ENCODE measurements at regions of chr19 and their contacts with region 1.

Region 1: GRCh38 chr19:9674663-9675357 is at the start of gene ZNF562:
- DNase-seq: peak; percentile 84 to 92 (median 88)
- H3K4me3 ChIP-seq: peak within 1 kb of the TSS; percentile 54 to 98 (median 86)
- H3K27ac ChIP-seq: peak within 1 kb of the TSS; percentile 67 to 99 (median 96)
- H3K27me3 ChIP-seq: no peaks in the 10 kb centered on the region
- CTCF ChIP-seq: peak in 20 of 56 donors; percentile 11 to 41 (median 20)
- total RNA-seq, gene ZNF562: 31.2 to 59.9 (median 44.7) TPM

Region 2: GRCh38 chr19:9323919-9324583 is 350.8 kb before region 1 on chr19 and contains the start of gene ZNF559:
- intact Hi-C with region 1: loop called in 1 of 2 experiments (anchors 10 kb)
- DNase-seq: peak; percentile 76 to 90 (median 84)
- H3K4me3 ChIP-seq: peak within 1 kb of the TSS; percentile 67 to 100 (median 89)
- H3K27ac ChIP-seq: peak within 1 kb of the TSS; percentile 52 to 96 (median 89)
- H3K27me3 ChIP-seq: no peaks in the 10 kb centered on the region
- CTCF ChIP-seq: peak in 39 of 56 donors; percentile 12 to 60 (median 31)
- total RNA-seq, gene ZNF559: 14.4 to 49.0 (median 29.6) TPM

Region 3: DNA sequence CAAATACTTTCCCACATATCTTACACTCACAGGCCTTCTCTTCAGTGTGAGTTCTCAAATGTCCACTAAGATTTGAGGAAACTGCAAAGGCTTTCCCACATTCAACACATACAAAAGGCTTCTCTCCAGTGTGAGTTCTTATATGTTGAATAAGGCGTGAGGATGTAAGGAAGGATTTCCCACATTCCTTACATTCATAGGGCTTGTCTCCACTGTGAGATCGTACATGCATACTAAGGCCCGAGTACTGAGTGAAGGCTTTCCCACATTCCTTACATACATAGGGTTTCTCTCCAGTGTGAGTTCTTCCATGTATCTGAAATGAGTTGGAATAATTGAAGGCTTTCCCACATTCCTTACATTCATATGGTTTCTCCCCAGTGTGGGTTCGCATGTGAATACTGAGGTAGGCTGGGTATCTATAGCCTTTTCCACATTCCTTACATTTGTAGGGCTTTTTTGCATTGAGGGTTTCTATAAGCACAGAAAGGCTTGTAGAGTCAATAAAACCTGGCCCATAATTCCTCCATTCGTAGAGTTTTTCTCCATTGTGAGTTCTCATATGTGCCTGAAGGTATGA is 146.0 kb before region 1 on chr19:
- intact Hi-C with region 1: no loop called
- DNase-seq: no peak
- H3K4me3 ChIP-seq: no peak overlapping the region
- H3K27ac ChIP-seq: no peak overlapping the region
- H3K27me3 ChIP-seq: no peaks in the 10 kb centered on the region
- CTCF ChIP-seq: no peak

Region 4: GRCh38 chr19:9584073-9584833 is 90.6 kb before region 1 on chr19 and contains the start of gene ZNF121:
- intact Hi-C with region 1: loop called in 1 of 2 experiments (anchors 5 kb)
- DNase-seq: peak; percentile 76 to 94 (median 86)
- H3K4me3 ChIP-seq: peak within 1 kb of the TSS; percentile 58 to 99 (median 88)
- H3K27ac ChIP-seq: peak within 1 kb of the TSS; percentile 51 to 98 (median 93)
- H3K27me3 ChIP-seq: peaks cover 0 to 10% (median 0%) of the 10 kb centered on the region in 45 donors
- CTCF ChIP-seq: peak in 30 of 56 donors; percentile 11 to 56 (median 27)
- total RNA-seq, gene ZNF121: 16.5 to 34.9 (median 23.7) TPM

Region 5: DNA sequence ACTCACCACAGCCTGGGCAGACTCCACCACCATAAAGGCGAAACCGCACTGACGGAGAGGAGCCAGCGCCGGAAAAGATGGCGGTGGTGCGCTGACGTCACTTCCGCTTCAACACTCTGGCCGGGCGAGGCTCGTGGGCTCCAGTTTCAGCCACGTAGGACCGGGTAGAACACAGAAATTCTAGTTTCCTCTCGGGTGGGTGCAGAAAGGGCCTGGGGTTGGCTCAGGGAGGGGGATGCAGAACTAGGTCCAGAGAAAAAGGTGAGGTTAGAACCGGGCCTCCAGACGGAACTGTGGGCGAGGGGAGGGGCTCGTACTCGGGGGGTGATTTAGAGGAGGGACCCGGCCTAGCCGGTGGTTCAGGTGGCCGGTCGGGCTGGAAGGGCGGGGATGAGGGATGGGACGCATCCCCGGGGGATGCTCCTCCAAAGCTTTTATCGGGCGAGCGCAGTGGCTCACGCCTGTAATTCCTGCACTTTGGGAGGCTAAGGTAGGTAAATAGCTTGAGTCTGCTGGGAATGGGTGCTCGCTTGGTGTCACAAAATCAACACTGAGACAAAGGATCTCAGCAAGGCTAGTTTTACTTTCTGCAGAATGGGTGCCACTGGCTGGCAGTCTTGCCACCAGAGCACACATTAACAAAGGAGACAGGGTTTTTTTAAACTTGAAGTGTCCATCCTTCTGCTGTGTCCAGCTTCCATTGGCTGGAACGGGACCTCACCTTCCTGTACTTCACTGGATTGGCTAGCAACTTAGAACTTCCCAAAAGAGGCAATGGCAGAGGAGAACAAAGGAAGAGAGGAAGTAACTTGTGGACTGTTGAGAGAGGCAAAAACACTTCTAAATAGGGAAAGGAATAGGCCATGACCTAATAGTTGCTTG is 53.4 kb before region 1 on chr19 and contains the start of gene ZNF561:
- intact Hi-C with region 1: loop called (anchors 1 kb)
- DNase-seq: peak; percentile 79 to 90 (median 86)
- H3K4me3 ChIP-seq: peak within 1 kb of the TSS; percentile 55 to 99 (median 93)
- H3K27ac ChIP-seq: peak within 1 kb of the TSS; percentile 51 to 99 (median 95)
- H3K27me3 ChIP-seq: no peaks in the 10 kb centered on the region
- CTCF ChIP-seq: peak in 19 of 56 donors; percentile 5 to 47 (median 21)
- total RNA-seq, gene ZNF561: 15.0 to 38.5 (median 25.3) TPM

Region 6: DNA sequence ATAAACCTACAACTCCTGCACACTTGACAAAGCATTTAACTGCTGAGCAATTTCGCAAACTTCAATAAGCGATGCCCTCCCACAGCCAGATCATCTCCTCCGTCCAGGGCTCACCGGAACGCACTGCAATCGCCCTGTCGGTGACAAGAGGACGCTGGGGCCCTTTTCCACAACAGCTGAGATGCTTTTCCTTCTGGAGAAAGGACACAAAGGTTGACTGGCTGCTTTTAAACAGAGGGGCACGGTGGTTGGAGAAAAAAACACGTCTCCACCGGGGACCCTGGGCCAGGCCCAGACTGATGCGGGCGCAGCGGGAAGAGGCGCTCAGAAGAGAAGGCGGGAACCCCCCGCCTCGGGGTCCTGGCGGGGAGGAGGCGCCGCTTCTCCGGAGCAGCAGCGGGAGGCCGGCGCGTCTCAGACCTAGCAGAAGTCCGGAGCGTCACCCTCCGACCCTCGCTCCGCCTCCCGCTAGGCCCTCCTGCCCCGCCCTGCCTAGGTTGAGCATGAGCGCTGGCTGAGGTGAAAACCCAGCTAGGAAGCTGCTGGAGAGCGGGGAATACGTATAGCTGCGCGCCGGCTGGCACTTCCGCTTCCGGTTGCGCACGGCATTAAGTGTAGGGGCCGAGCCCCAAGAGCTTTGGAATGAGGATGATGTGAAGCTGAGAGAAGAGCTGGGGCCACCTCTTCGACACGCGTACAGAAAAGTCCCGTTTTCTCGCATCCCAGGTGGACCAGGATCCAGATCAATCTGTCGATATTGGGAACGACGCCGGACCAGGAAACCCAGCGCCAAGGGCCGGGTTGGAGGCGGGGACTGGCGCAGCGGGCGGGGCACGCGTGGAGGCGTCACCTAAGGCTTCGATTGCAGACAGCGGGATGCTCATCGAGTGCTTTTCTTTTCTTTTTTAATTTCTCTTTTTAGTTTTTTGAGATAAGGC is 93.6 kb after region 1 on chr19 and contains the start of gene ZNF846:
- intact Hi-C with region 1: loop called in 1 of 2 experiments (anchors 5 kb)
- DNase-seq: peak; percentile 85 to 95 (median 92)
- H3K4me3 ChIP-seq: peak within 1 kb of the TSS; percentile 63 to 97 (median 87)
- H3K27ac ChIP-seq: peak within 1 kb of the TSS; percentile 66 to 98 (median 93)
- H3K27me3 ChIP-seq: no peaks in the 10 kb centered on the region
- CTCF ChIP-seq: peak in 27 of 56 donors; percentile 3 to 51 (median 18)
- total RNA-seq, gene ZNF846: 22.4 to 55.4 (median 33.7) TPM